ENCODE measurements at regions of chr6 and their contacts with region 1.

Region 1: GRCh38 chr6:75296811-75297779 is 12.5 kb upstream of the TMEM30A start:
- DNase-seq: no peak
- ATAC-seq: peak; percentile 57
- H3K4me3 ChIP-seq: no peak overlapping the region
- H3K27ac ChIP-seq: no peak overlapping the region
- H3K4me1 ChIP-seq: no peaks in the 10 kb centered on the region
- H3K27me3 ChIP-seq: no peaks in the 10 kb centered on the region

Region 2: GRCh38 chr6:75351543-75351942 is 54.4 kb after region 1 on chr6:
- intact Hi-C with region 1: loop called in 1 of 2 experiments (anchors 5 kb)
- DNase-seq: no peak
- ATAC-seq: no peak
- H3K4me3 ChIP-seq: no peak overlapping the region
- H3K27ac ChIP-seq: no peak overlapping the region
- H3K4me1 ChIP-seq: peaks cover 0 to 16% of the 10 kb centered on the region in 2 donors
- H3K27me3 ChIP-seq: no peaks in the 10 kb centered on the region

Region 3: DNA sequence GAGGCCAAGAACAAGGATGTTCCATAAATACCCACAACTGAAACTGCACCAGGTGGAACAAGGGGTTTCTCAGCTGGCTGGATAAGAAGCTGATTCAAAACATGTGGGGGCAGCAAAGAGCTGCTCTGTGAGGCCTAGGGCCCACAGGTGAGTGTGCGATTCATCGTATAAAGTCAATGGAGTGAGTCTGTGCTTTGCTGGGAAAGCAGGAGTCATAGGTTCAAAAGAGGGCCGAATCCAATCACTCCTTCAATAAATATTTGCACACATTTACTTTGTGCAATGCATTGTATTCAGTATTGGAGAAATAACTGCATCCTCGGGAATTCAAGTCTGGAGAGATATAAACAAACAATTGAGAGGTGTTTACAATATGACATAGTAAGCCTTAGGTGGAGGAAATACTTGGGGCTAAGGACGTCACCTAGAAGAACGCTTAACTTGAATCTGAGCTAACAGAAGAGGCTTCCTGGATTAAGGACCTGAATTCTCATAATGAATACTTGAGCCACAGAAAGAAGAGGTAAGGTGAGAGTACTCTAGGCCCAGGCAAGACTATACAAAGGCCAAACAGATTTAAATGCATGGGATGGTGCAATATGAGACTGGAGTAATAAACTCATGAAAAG is 71.2 kb after region 1 on chr6:
- intact Hi-C with region 1: loop called in 1 of 2 experiments (anchors 5 kb)
- DNase-seq: no peak
- ATAC-seq: no peak
- H3K4me3 ChIP-seq: no peak overlapping the region
- H3K27ac ChIP-seq: peak overlapping the region in 1 of 2 donors; percentile 14
- H3K4me1 ChIP-seq: peaks cover 0 to 1% of the 10 kb centered on the region in 2 donors
- H3K27me3 ChIP-seq: no peaks in the 10 kb centered on the region

Region 4: GRCh38 chr6:75437421-75437891 is 140.4 kb after region 1 on chr6:
- intact Hi-C with region 1: no loop called
- DNase-seq: no peak
- ATAC-seq: peak; percentile 96
- H3K4me3 ChIP-seq: no peak overlapping the region
- H3K27ac ChIP-seq: peak overlapping the region; percentile 70 to 82
- H3K4me1 ChIP-seq: peaks cover 9 to 11% of the 10 kb centered on the region in 2 donors
- H3K27me3 ChIP-seq: no peaks in the 10 kb centered on the region

Region 5: DNA sequence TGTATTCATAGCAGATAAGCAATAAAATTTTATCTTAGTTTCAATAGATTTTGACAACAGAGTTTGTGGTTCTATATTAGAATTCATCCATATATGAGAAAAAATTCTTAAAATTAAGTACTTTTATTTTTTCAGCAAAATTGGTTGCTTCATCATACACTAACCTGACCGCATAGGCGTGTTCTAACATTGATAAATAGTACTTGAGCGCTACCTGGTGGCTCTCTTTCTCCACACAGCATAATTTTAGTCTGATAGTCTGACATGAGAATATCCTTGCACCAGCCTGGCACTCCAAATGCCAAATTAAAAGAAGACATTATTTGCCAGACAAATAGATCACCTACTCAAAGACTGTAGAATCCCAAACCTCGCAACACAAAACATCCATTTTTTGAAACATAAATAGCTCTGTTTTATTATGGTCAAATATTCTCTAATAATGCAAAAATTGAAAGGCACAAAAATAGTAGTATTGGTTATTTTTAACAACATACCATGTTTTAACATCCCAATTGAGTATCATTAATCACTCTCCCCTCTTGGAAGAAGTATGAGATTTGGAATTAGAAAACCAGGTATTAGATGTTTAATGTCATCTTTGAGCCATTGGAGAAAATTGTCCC is 229.5 kb after region 1 on chr6:
- intact Hi-C with region 1: loop called (anchors 1 to 2 kb)
- DNase-seq: peak in 1 of 2 donors; percentile 44
- ATAC-seq: peak; percentile 88
- H3K4me3 ChIP-seq: no peak overlapping the region
- H3K27ac ChIP-seq: no peak overlapping the region
- H3K4me1 ChIP-seq: no peaks in the 10 kb centered on the region
- H3K27me3 ChIP-seq: no peaks in the 10 kb centered on the region

Measured in aorta (tissue), 5 donors.